A549 (cell line): ENCODE measurements at regions of chr10 and their contacts with region 1.

Region 1: GRCh38 chr10:25999295-25999981 is 65.4 kb downstream of the MYO3A start:
- DNase-seq: no peak
- ATAC-seq: no peak
- H3K4me3 ChIP-seq: no peak overlapping the region
- H3K27ac ChIP-seq: no peak overlapping the region
- H3K4me1 ChIP-seq: no peaks in the 10 kb centered on the region
- CTCF ChIP-seq: no peak
- EP300 ChIP-seq: no peak
- POLR2A ChIP-seq: no peak
- RAD21 ChIP-seq: no peak

Region 2: GRCh38 chr10:25944780-25945179 is 54.7 kb before region 1 on chr10:
- CTCF ChIA-PET with region 1: no interaction called
- POLR2A ChIA-PET with region 1: interaction called, 10 read pairs
- DNase-seq: no peak
- ATAC-seq: no peak
- H3K4me3 ChIP-seq: no peak overlapping the region
- H3K27ac ChIP-seq: no peak overlapping the region
- H3K4me1 ChIP-seq: no peaks in the 10 kb centered on the region
- CTCF ChIP-seq: no peak
- EP300 ChIP-seq: no peak
- POLR2A ChIP-seq: no peak
- RAD21 ChIP-seq: no peak

Region 3: DNA sequence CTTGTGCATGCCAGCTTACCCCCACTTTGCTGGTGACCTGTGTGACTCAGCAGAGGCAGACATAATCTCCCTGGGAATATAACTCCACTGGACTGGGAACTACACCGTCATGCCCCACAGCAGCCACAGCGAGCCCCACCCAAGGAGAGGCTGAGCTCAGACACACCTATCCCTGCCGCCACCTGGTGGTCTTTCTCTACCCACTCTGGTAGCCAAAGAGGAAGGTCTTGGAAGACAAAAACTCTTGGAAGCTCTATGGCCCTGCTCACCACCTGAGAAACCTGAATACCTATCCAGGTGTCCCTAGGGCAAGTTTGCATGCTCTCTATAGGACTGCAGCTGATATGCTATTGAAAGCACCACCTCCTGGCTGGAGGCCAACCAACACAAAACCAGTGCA is 17.3 kb before region 1 on chr10:
- CTCF ChIA-PET with region 1: no interaction called
- POLR2A ChIA-PET with region 1: no interaction called
- DNase-seq: no peak
- ATAC-seq: no peak
- H3K4me3 ChIP-seq: no peak overlapping the region
- H3K27ac ChIP-seq: no peak overlapping the region
- H3K4me1 ChIP-seq: no peaks in the 10 kb centered on the region
- CTCF ChIP-seq: no peak
- EP300 ChIP-seq: no peak
- POLR2A ChIP-seq: no peak
- RAD21 ChIP-seq: no peak

Region 4: GRCh38 chr10:26015092-26015491 is 15.7 kb after region 1 on chr10:
- CTCF ChIA-PET with region 1: no interaction called
- POLR2A ChIA-PET with region 1: no interaction called
- DNase-seq: no peak
- ATAC-seq: no peak
- H3K4me3 ChIP-seq: no peak overlapping the region
- H3K27ac ChIP-seq: no peak overlapping the region
- H3K4me1 ChIP-seq: no peaks in the 10 kb centered on the region
- CTCF ChIP-seq: no peak
- EP300 ChIP-seq: no peak
- POLR2A ChIP-seq: no peak
- RAD21 ChIP-seq: no peak